ENCODE measurements at regions of chr5 and their contacts with region 1.

Region 1: GRCh38 chr5:65925601-65926275 is 637 bp upstream of the ERBIN start:
- DNase-seq: peak; percentile 85
- H3K4me3 ChIP-seq: peak overlapping the region; percentile 51 to 89 (median 82)
- H3K27ac ChIP-seq: peak overlapping the region; percentile 97 to 100 (median 99)
- H3K4me1 ChIP-seq: peaks cover 6 to 44% (median 12%) of the 10 kb centered on the region in 4 donors
- H3K27me3 ChIP-seq: no peaks in the 10 kb centered on the region
- CTCF ChIP-seq: peak in 3 of 5 experiments; percentile 35 to 61 (median 35)
- EP300 ChIP-seq: no peak
- POLR2A ChIP-seq: peak; percentile 94

Region 2: GRCh38 chr5:65663804-65664521 is 261.8 kb before region 1 on chr5:
- in situ Hi-C with region 1: no loop called
- intact Hi-C with region 1: no loop called
- DNase-seq: no peak
- H3K4me3 ChIP-seq: no peak overlapping the region
- H3K27ac ChIP-seq: no peak overlapping the region
- H3K4me1 ChIP-seq: no peaks in the 10 kb centered on the region
- H3K27me3 ChIP-seq: no peaks in the 10 kb centered on the region
- CTCF ChIP-seq: peak in 4 of 5 experiments; percentile 8 to 44 (median 40)
- EP300 ChIP-seq: no peak
- POLR2A ChIP-seq: no peak

Region 3: DNA sequence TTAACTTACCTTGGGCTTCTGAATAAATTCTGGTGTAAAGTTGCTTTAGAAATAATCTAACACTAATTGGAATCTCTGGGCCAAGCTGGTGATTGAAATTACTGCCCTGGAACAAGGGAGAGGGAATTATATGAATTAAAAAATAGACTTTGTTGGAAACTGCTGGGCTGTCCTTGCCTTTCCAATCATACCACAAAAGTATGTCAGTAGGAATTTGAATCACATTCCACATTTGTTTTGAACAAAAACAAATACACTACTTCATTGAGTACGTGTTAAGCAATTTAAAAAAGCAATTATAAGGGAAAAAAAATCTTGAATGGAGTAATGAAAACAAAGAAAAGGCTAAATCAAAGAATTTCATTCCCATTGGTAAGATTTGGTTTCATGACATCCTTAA is 115.9 kb after region 1 on chr5:
- in situ Hi-C with region 1: loop called in 1 of 4 experiments (anchors 25 kb)
- intact Hi-C with region 1: no loop called
- DNase-seq: no peak
- H3K4me3 ChIP-seq: no peak overlapping the region
- H3K27ac ChIP-seq: no peak overlapping the region
- H3K4me1 ChIP-seq: no peaks in the 10 kb centered on the region
- H3K27me3 ChIP-seq: no peaks in the 10 kb centered on the region
- CTCF ChIP-seq: no peak
- EP300 ChIP-seq: no peak
- POLR2A ChIP-seq: no peak

Region 4: DNA sequence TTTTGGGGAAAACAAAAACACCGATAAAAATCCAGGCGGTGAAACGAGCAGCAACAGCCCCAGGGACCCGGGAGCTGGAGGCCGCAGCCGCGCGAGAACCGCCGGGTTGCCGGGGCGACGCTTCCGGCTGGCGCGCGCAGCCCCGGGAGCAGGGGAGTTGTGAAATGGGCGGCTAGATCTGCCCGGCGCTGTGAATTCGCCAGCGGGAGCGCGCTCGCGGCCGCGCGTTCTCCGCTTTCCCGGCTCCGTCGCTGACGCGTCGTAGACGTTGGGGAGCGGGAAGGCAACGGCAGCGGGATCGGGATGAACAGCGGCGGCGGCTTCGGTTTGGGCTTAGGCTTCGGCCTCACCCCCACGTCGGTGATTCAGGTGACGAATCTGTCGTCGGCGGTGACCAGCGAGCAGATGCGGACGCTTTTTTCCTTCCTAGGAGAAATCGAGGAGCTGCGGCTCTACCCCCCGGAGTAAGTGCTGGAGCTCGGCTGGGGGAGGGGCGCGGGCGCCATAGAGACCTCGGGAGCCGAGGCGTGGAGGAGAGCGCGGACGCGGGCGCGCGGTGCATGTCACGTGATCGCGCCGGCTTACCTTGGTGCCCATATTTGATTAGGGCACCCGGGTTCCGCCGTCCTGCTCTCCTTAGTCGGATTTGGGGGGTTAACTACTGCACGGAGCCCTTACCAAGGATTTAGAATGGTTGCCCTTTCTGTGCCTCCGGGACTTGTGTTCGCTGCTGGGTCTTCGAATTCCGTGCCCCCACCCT is 218.5 kb after region 1 on chr5 and contains the start of gene SREK1:
- in situ Hi-C with region 1: loop called in 2 of 4 experiments (anchors 10 kb)
- intact Hi-C with region 1: loop called (anchors 10 kb)
- DNase-seq: peak; percentile 93
- H3K4me3 ChIP-seq: peak within 1 kb of the TSS; percentile 63 to 84 (median 74)
- H3K27ac ChIP-seq: peak within 1 kb of the TSS; percentile 97 to 99 (median 99)
- H3K4me1 ChIP-seq: peaks cover 17 to 35% (median 28%) of the 10 kb centered on the region in 4 donors
- H3K27me3 ChIP-seq: no peaks in the 10 kb centered on the region
- CTCF ChIP-seq: peak in 1 of 5 experiments; percentile 12
- EP300 ChIP-seq: no peak
- POLR2A ChIP-seq: peak; percentile 94
- total RNA-seq, gene SREK1: 81.6 to 152 (median 129) TPM